Esophagus muscularis mucosa (tissue), 4 donors: ENCODE measurements at regions of chr9 and their contacts with region 1.

Region 1: DNA sequence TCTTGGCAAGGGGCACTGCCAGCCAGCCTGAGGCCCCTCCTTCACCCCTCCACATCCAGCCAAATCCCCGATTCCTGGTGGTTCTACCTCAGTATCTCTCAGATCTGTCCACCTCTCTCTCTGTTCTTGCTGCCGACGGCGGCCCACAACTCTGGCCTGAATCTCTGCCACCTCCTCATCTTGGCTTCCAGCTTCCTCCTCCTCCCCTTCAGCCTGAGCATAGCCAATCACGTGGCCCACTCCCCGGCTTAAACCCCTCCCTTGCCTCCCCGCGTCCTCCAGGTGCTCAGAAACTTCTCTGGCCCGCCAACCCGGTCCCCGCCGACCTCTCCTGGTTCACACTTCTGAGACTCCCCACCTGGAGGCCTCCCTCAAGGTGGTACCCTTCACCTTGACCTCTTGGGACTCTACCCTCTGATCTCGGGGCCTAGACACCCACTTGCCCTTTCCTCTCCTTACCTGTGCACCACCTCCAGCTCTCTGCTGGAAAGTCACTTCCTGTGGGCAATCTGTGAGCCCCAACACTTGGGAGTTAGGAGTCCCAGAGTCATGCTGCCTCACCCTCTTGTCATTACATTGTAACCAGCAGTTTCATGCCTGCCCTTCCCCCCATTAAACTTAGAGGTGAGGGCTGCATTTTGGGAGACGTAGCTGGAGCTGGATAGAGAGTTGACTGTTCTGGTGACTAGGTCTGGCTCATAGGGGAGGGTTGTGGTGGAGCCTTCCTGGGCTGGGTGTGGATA is 4.6 kb upstream of the SET start:
- DNase-seq: no peak
- H3K4me3 ChIP-seq: peak overlapping the region; percentile 54 to 62 (median 58)
- H3K27ac ChIP-seq: peak overlapping the region; percentile 67 to 77 (median 73)
- H3K4me1 ChIP-seq: peaks cover 21 to 43% (median 34%) of the 10 kb centered on the region in 4 donors
- H3K27me3 ChIP-seq: no peaks in the 10 kb centered on the region
- CTCF ChIP-seq: no peak
- EP300 ChIP-seq: no peak
- POLR2A ChIP-seq: no peak

Region 2: GRCh38 chr9:127802576-127803443 is 881.6 kb before region 1 on chr9 and contains the start of gene FPGS:
- intact Hi-C with region 1: no loop called
- DNase-seq: peak; percentile 97
- H3K4me3 ChIP-seq: peak within 1 kb of the TSS; percentile 64 to 85 (median 80)
- H3K27ac ChIP-seq: peak within 1 kb of the TSS; percentile 82 to 98 (median 94)
- H3K4me1 ChIP-seq: peaks cover 20 to 41% (median 36%) of the 10 kb centered on the region in 4 donors
- H3K27me3 ChIP-seq: no peaks in the 10 kb centered on the region
- CTCF ChIP-seq: no peak
- EP300 ChIP-seq: no peak
- POLR2A ChIP-seq: peak; percentile 53
- total RNA-seq, gene FPGS: 36.1 to 56.3 (median 50.1) TPM

Region 3: DNA sequence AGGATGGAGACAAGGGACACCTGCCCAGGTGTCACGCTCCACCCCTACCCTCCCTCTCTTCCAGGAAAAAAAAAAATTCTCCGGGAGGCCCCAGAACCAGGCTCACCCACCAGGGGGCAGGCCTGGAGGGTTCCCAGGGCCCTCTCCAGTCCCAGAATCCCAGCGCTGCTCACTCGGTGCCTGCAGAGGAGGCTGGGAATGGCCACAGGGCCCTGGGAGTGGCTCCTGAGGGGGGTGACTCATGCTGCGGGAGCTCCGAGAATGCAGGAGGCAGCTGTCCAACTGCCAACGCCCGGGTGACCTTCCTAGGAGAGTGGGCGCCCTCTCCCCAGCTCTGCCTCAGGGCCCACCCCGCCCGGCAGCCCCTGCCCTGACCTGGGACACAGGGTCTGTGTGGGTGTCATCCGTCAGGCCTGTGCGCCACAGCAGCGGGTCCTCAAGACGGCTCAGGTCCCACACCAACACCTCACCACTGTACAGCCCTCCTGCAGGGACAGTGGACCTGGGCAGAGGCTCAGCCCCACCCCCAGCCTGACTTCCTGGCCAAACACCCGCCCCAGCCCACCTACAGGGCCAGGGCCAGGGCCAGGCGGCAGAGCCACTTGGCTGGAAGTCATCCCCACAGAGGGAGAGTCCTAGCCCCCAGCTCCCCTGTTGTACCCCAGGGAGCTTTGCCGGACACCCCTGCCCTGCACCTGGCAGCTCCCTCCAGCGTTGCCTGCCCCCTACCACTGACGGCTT is 49.0 kb before region 1 on chr9:
- intact Hi-C with region 1: loop called (anchors 5 kb)
- DNase-seq: peak; percentile 95
- H3K4me3 ChIP-seq: peak overlapping the region in 3 of 4 donors; percentile 2 to 30 (median 20)
- H3K27ac ChIP-seq: peak overlapping the region; percentile 80 to 94 (median 92)
- H3K4me1 ChIP-seq: peaks cover 22 to 30% (median 26%) of the 10 kb centered on the region in 4 donors
- H3K27me3 ChIP-seq: no peaks in the 10 kb centered on the region
- CTCF ChIP-seq: peak; percentile 63 to 75 (median 72)
- EP300 ChIP-seq: no peak
- POLR2A ChIP-seq: no peak

Region 4: DNA sequence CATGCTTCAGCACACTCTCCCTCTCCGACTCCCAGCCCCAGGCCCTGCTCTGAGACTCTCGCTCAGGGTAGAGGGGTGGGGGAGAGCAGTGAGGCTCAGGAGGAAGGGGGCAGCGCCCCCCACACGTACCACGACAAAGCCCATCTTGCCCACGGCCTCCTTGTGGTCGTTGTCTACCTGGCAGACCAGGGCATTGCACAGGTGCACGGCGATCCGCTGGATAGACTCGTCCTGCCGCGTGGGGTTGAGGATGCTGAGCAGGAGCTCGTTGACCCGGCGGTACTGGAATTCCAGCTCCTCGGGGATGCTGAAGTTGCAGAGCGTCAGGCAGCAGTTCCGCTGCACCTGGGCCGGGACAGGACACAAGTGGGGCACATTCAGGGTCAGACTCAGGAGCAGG is 58.0 kb after region 1 on chr9:
- intact Hi-C with region 1: no loop called
- DNase-seq: no peak
- H3K4me3 ChIP-seq: no peak overlapping the region
- H3K27ac ChIP-seq: no peak overlapping the region
- H3K4me1 ChIP-seq: no peaks in the 10 kb centered on the region
- H3K27me3 ChIP-seq: no peaks in the 10 kb centered on the region
- CTCF ChIP-seq: no peak
- EP300 ChIP-seq: no peak
- POLR2A ChIP-seq: no peak